ENCODE measurements at regions of chr12 and their contacts with region 1.

Region 1: GRCh38 chr12:112916270-112916669 is 9.5 kb downstream of the OAS1 start:
- DNase-seq: no peak
- ATAC-seq: no peak
- H3K4me3 ChIP-seq: no peak overlapping the region
- H3K4me3 Mint-ChIP-seq: no peak overlapping the region
- H3K27ac ChIP-seq: no peak overlapping the region
- H3K27ac Mint-ChIP-seq: no peak overlapping the region
- H3K4me1 ChIP-seq: no peaks in the 10 kb centered on the region
- H3K4me1 Mint-ChIP-seq: peaks cover 22 to 40% (median 27%) of the 10 kb centered on the region in 3 donors
- H3K27me3 ChIP-seq: no peaks in the 10 kb centered on the region
- H3K27me3 Mint-ChIP-seq: no peaks in the 10 kb centered on the region

Region 2: GRCh38 chr12:112900299-112901145 is 15.7 kb before region 1 on chr12:
- CTCF ChIA-PET with region 1: interaction called in 1 of 2 experiments, 10 read pairs
- POLR2A ChIA-PET with region 1: no interaction called
- DNase-seq: peak in 18 of 35 experiments; percentile 12 to 68 (median 25)
- ATAC-seq: peak in 3 of 4 experiments; percentile 43 to 56 (median 52)
- H3K4me3 ChIP-seq: no peak overlapping the region
- H3K4me3 Mint-ChIP-seq: no peak overlapping the region
- H3K27ac ChIP-seq: no peak overlapping the region
- H3K27ac Mint-ChIP-seq: peak overlapping the region; percentile 17 to 43
- H3K4me1 ChIP-seq: peaks cover 5 to 12% of the 10 kb centered on the region in 2 experiments
- H3K4me1 Mint-ChIP-seq: peaks cover 26 to 40% (median 32%) of the 10 kb centered on the region in 3 donors
- H3K27me3 ChIP-seq: peaks cover 0 to 6% of the 10 kb centered on the region in 2 experiments
- H3K27me3 Mint-ChIP-seq: peaks cover 13 to 14% of the 10 kb centered on the region in 2 donors